Activated T-helper 1 cell treated with anti-CD3 and anti-CD28 coated beads, Interleukin-12 subunit alpha, Interleukin-12 subunit beta, Interleukin-2, Interleukin-4 antibody, amounts not matched to agents 30 ng/mL and 10 ng/mL and 1 ng/mL, durations not matched to agents 14 hours and 24 hours and 36 hours (primary cell): ENCODE measurements at regions of chr12 and their contacts with region 1.

Region 1: GRCh38 chr12:49740930-49741881 is at the start of gene TMBIM6:
- DNase-seq: peak; percentile 99
- H3K4me3 Mint-ChIP-seq: peak within 1 kb of the TSS; percentile 86
- H3K27ac Mint-ChIP-seq: peak within 1 kb of the TSS; percentile 94
- H3K4me1 Mint-ChIP-seq: peaks cover 30% of the 10 kb centered on the region
- H3K27me3 Mint-ChIP-seq: peaks cover 4% of the 10 kb centered on the region
- total RNA-seq, gene TMBIM6: 382 and 393 TPM in 2 replicates

Region 2: DNA sequence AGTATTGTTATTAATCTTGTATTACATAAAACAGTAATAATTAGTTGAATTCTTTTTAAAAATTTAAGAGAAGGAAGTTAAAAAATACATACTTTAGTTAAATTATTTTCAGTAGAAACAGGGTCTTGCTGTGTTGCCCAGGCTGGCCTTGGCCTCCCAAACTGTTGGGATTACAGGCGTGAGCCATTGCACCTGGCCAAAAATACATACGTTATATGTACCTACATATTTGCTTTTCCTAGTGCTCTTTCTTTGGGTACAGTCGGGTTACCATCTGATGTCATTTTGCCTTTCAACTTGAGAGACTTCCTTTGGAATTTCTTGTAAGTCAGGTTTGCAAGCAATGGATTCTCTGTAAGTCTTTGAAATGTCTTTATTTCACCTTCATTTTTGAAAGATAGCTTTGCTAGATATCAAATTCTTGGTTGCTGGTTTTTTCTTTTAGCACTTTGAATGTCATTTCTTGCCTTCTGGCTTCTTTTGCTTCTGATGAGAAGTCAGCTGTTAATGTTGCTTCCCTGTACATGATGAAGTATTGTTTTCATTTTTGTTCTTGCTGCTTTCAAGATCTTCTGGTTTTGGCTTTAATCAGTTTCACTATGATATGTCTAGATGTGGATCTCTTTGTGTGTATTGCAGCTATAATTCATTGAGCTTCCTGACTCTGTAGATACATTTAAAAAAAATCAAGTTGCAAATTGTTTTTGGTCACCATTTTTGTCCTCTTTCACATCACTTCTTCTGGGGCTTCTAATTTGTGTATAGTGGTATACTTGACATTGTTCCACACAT is 289.5 kb before region 1 on chr12:
- intact Hi-C with region 1: no loop called
- DNase-seq: no peak
- H3K4me3 Mint-ChIP-seq: peak overlapping the region; percentile 1
- H3K27ac Mint-ChIP-seq: peak overlapping the region; percentile 32
- H3K4me1 Mint-ChIP-seq: peaks cover 23% of the 10 kb centered on the region
- H3K27me3 Mint-ChIP-seq: no peaks in the 10 kb centered on the region

Region 3: DNA sequence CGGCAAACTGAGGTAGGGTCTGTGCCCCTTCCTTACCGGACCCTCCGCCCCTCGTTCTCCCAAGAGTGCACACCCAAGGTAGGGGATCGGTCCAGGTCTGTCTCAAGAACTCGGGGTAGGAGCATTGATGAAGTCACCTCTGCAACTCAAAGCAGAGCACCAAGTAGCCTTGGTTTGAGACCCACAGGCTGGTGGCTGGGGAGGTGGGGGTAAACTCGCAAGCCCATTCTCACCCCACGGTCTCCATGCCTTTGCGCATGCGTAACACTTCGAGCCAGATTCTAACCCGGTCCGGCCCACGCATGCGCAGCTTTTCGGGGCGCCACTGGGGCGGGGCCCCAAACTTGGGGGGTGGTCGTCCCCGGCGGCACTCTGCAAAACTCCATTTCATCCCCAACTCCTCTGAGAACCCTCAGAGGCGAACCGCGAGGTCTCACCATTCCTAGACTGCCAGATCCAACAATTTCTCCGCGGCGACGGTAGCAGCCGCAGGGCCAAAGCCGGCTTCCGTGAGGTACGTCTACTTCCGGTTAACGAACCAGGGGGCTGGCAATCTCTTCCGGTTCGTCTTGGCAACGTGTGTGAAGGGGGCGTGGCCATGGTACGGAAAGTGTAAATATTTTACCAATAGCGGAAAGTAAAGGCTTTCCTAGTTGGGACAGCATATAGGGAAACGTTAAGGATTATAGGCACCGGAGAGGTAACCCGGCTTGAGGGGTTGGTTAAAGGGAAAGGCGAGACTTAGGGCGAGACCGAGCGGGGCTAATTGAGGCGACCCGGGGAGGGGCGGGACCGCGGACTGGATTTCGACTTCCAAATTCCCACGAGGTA is 173.4 kb before region 1 on chr12 and contains the start of gene MCRS1:
- intact Hi-C with region 1: loop called (anchors 1 kb)
- DNase-seq: peak; percentile 85
- H3K4me3 Mint-ChIP-seq: peak within 1 kb of the TSS; percentile 95
- H3K27ac Mint-ChIP-seq: peak within 1 kb of the TSS; percentile 96
- H3K4me1 Mint-ChIP-seq: peaks cover 57% of the 10 kb centered on the region
- H3K27me3 Mint-ChIP-seq: no peaks in the 10 kb centered on the region
- total RNA-seq, gene MCRS1: 77.1 and 77.9 TPM in 2 replicates

Region 4: GRCh38 chr12:49644620-49644994 is 96.6 kb before region 1 on chr12:
- intact Hi-C with region 1: loop called (anchors 1 kb)
- DNase-seq: peak; percentile 71
- H3K4me3 Mint-ChIP-seq: no peak overlapping the region
- H3K27ac Mint-ChIP-seq: peak overlapping the region; percentile 82
- H3K4me1 Mint-ChIP-seq: peaks cover 26% of the 10 kb centered on the region
- H3K27me3 Mint-ChIP-seq: no peaks in the 10 kb centered on the region

Region 5: GRCh38 chr12:49763006-49763591 is 21.9 kb after region 1 on chr12:
- intact Hi-C with region 1: loop called (anchors 1 kb)
- DNase-seq: peak; percentile 61
- H3K4me3 Mint-ChIP-seq: peak overlapping the region; percentile 61
- H3K27ac Mint-ChIP-seq: peak overlapping the region; percentile 75
- H3K4me1 Mint-ChIP-seq: peaks cover 49% of the 10 kb centered on the region
- H3K27me3 Mint-ChIP-seq: peaks cover 3% of the 10 kb centered on the region

Region 6: DNA sequence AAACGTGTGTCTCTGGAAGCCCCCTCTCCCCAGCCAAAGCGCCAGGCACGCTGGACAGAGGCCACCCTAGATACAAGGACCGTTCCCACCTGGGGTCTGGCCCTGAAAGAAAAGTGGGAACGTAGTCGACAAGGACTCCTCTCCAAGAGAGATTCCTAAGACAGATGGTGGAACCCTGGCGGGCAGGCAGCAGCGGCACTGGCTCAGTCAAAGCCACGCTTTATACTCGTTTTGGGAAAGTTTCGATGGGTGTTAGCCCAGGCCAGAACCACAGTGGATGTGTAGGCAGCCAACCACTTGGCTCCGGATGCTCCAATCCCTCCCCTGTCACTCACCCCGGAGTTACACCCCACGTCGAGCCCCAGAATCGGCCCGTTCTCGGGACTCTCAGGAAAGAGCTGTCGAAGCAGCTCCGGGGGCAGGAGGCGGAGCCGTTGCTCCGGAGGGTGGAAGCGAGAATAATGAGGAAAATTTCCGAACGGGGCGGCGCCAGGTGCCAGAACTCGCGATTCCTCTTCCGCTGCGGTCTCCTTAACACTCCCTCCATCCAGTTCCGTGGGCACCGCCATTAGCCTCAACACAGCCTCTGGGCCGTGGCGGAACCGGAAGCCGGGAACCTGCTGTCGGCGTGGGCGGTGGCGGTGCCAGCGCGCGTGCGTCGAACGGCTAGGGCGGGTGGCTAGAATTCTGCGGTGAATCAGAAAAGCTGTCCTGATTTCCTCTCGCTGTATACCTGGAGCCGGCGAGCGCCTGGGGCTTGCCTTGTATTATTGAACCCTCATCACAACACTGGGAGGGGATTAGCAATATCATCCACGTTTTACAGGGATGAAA is 101.5 kb after region 1 on chr12 and contains the start of gene BCDIN3D:
- intact Hi-C with region 1: loop called (anchors 1 kb)
- DNase-seq: peak; percentile 91
- H3K4me3 Mint-ChIP-seq: peak within 1 kb of the TSS; percentile 91
- H3K27ac Mint-ChIP-seq: peak within 1 kb of the TSS; percentile 84
- H3K4me1 Mint-ChIP-seq: peaks cover 29% of the 10 kb centered on the region
- H3K27me3 Mint-ChIP-seq: peaks cover 1% of the 10 kb centered on the region
- total RNA-seq, gene BCDIN3D: 3.6 and 4.0 TPM in 2 replicates